Caco-2 (cell line): ENCODE measurements at regions of chr6 and their contacts with region 1.

Region 1: GRCh38 chr6:32413427-32414047 is 6.6 kb upstream of the BTNL2 start:
- DNase-seq: peak; percentile 75 to 85
- H3K4me3 ChIP-seq: no peak overlapping the region
- H3K4me3 Mint-ChIP-seq: peak overlapping the region; percentile 33
- H3K27ac Mint-ChIP-seq: no peak overlapping the region
- H3K4me1 ChIP-seq: no peaks in the 10 kb centered on the region
- H3K4me1 Mint-ChIP-seq: peaks cover 16% of the 10 kb centered on the region
- H3K27me3 ChIP-seq: no peaks in the 10 kb centered on the region
- H3K27me3 Mint-ChIP-seq: peaks cover 15% of the 10 kb centered on the region
- CTCF ChIP-seq: peak; percentile 93 to 94

Region 2: GRCh38 chr6:32796848-32797776 is 383.6 kb after region 1 on chr6:
- CTCF ChIA-PET with region 1: no interaction called
- POLR2A ChIA-PET with region 1: no interaction called
- intact Hi-C with region 1: loop called (anchors 1 kb)
- DNase-seq: peak; percentile 63 to 73
- H3K4me3 ChIP-seq: no peak overlapping the region
- H3K4me3 Mint-ChIP-seq: peak overlapping the region; percentile 56
- H3K27ac Mint-ChIP-seq: no peak overlapping the region
- H3K4me1 ChIP-seq: no peaks in the 10 kb centered on the region
- H3K4me1 Mint-ChIP-seq: no peaks in the 10 kb centered on the region
- H3K27me3 ChIP-seq: no peaks in the 10 kb centered on the region
- H3K27me3 Mint-ChIP-seq: peaks cover 25% of the 10 kb centered on the region
- CTCF ChIP-seq: peak; percentile 72 to 90